ENCODE measurements at regions of chr5 and their contacts with region 1.

Region 1: DNA sequence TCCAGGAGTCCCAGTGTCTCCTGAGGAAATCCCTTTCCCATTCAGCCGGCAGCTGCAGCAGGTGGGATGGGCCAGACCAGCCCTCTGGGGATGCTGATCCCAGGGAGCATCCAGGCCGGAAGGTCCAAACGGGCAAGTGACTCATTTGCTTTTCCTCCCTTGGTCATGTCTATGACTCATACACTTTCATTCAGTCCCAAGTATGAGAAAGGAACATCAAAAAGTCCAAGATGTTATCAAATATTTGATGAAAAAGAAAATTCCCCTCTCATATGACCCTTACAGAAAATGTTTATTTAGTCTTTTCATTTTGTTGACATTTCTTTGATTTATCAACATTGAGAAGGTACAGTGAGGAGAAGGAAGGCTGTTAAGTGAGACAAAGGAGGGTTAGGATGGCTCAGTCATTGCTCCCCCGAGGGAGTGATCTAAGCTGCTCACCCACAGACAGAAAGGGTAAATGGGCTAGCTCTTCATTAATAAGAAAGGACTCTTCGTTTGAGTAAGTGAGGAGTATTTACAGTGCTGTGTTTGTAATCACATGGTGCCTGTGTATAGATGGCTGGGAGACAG is 117.6 kb upstream of the ANKRD55 start:
- DNase-seq: peak; percentile 87 to 94
- H3K4me3 ChIP-seq: no peak overlapping the region
- H3K4me3 Mint-ChIP-seq: peak overlapping the region; percentile 57
- H3K27ac Mint-ChIP-seq: peak overlapping the region; percentile 85
- H3K4me1 ChIP-seq: peaks cover 83% of the 10 kb centered on the region
- H3K4me1 Mint-ChIP-seq: peaks cover 55% of the 10 kb centered on the region
- H3K27me3 ChIP-seq: no peaks in the 10 kb centered on the region
- H3K27me3 Mint-ChIP-seq: no peaks in the 10 kb centered on the region
- CTCF ChIP-seq: no peak

Region 2: DNA sequence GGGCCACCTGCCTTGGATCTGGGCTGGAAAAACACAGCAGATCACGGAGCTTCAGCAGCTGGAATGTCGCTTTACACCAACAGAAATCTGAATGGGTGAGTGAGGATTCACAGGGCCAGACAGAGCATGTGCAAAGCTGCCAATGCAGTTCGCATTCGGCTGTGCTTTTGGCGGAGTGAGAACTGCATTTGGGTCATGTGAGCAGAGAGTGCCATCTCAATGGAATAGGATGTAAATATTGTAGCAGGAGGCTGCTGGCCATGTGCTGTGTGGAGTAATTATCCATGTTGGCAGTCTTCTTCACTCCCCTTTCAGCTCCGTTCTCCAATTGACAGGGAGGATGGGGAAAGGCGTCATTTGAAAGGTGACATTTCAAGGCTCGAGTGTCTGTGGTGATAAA is 117.5 kb before region 1 on chr5 and contains the start of gene ANKRD55:
- CTCF ChIA-PET with region 1: no interaction called
- POLR2A ChIA-PET with region 1: no interaction called
- intact Hi-C with region 1: no loop called
- DNase-seq: no peak
- H3K4me3 ChIP-seq: no peak within 1 kb of the TSS
- H3K4me3 Mint-ChIP-seq: no peak within 1 kb of the TSS
- H3K27ac Mint-ChIP-seq: no peak within 1 kb of the TSS
- H3K4me1 ChIP-seq: no peaks in the 10 kb centered on the region
- H3K4me1 Mint-ChIP-seq: no peaks in the 10 kb centered on the region
- H3K27me3 ChIP-seq: no peaks in the 10 kb centered on the region
- H3K27me3 Mint-ChIP-seq: no peaks in the 10 kb centered on the region
- CTCF ChIP-seq: no peak
- total RNA-seq, gene ANKRD55: 0.27 and 0.63 TPM in 2 replicates

Region 3: GRCh38 chr5:56366986-56367385 is 16.3 kb after region 1 on chr5:
- CTCF ChIA-PET with region 1: no interaction called
- POLR2A ChIA-PET with region 1: interaction called, 13 read pairs
- intact Hi-C with region 1: no loop called
- DNase-seq: no peak
- H3K4me3 ChIP-seq: no peak overlapping the region
- H3K4me3 Mint-ChIP-seq: no peak overlapping the region
- H3K27ac Mint-ChIP-seq: no peak overlapping the region
- H3K4me1 ChIP-seq: no peaks in the 10 kb centered on the region
- H3K4me1 Mint-ChIP-seq: peaks cover 5% of the 10 kb centered on the region
- H3K27me3 ChIP-seq: no peaks in the 10 kb centered on the region
- H3K27me3 Mint-ChIP-seq: no peaks in the 10 kb centered on the region
- CTCF ChIP-seq: no peak